ENCODE measurements at regions of chr1 and their contacts with region 1.

Region 1: DNA sequence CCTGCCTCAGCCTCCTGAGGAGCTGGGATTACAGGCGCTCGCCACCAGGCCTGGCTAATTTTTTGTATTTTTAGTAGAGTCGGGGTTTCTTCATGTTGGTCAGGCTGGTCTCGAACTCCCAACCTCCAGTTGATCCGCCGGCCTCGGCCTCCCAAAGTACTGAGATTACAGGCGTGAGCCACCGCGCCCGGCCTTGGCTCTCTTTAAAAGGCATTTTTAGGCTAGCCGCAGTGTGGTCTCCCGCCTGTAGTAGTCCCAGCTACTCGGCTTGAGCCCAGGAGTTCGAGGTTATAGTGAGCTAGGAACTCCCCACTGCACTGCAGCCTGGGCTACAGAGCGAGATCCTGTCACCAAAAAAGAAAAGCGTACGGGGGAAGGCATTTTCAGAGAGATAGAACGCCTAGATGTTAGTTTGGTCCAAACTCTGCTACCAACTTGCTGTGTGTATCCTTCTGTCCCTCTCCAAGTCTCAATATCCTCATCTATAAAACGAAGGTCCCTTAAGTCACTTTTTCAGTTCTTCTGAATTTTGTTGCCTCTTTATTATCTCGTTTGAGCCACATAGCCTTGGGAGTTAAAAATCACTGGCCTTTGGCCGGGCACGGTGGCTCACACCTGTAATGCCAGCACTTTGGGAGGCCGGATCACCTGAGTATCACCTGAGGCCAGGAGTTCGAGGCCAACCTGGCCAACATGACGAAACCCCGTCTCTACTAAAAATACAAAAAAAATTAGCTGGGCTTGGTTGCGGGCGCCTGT is 734 bp downstream of the MED18 start:
- DNase-seq: peak in 23 of 42 donors; percentile 2 to 45 (median 15)

Region 2: GRCh38 chr1:28208818-28209441 is 120.6 kb before region 1 on chr1:
- intact Hi-C with region 1: no loop called
- DNase-seq: peak; percentile 30 to 88 (median 74)

Region 3: DNA sequence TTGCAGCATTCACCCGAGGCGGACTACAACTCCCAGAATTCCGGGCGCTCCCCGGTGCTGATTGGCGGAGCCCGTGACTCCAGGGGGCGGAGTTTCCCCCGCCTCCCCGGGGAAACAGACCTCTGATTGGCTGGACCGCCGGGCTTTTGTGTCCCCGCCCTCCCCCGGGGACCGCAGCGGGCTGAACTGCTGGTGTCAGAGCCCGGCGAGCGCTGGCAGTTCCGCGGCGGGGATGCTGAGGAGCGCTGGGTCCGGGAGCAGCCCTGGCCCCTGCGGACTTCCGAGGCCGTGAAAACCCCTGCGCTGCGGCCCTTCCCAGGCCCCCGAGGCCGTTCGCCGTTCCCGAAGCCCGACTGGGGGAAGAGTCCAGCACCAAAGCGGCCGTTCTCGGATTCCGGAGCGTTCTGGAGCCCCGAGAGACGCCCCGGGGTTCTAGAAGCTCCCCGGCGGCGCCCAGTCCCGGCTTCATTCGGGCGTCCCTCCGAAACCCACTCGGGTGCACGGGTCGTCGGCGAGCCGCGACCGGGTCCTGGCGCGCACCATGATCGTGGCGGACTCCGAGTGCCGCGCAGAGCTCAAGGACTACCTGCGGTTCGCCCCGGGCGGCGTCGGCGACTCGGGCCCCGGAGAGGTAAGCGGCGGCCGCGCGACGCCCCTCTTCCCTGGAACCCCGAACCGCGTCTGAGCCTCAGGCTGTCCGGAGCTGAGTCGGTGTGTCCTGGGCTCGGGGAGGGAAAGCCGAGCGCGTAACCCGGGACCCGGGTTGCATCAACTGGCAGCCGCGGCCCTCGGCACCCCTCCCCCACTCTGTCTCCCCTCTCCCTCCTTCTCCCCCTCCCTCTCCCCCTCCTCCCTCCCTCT is 70.0 kb before region 1 on chr1 and contains the start of gene SESN2:
- intact Hi-C with region 1: loop called (anchors 5 kb)
- DNase-seq: peak; percentile 98 to 100 (median 99)

Measured in head of caudate nucleus (tissue), 42 donors.